Activated B cell treated with CpG ODN at 0.5 μM for 24 hours (primary cell): ENCODE measurements at regions of chr7 and their contacts with region 1.

Region 1: DNA sequence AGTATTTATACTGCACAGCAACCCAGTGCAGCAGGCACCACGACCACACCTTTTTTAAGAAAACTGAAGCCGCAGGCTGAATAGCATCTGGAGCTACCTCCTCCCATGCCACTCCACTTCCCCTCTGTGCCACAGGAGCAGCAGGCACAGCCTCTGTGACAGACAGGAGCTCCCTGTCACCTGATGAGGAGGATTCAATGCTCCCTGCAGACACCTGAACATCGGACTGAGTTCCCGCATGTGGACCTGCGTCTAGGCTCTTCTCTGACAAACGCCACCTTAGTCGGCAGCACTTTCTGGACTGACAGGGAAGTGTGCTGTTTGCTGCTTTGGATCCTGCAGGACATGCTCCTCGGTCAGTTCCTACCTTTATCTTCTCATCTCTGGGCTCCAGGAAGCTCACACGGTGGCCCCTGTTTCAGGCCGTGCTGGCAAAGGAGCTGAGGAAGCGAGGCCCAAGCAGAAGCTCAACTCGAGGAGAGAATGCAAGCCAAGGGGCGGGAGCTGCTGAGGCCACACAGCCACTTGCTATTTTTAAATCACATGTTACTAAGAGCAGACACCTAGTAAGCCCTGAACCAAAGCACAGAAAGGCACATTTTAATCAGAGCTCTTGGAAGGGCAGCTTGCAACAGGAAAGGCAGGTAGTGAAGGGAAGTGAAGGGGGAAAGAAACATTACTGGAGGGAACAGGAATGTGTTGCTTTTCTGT is 56.6 kb downstream of the VOPP1 start:
- DNase-seq: no peak
- ATAC-seq: peak; percentile 21
- H3K4me3 Mint-ChIP-seq: peak overlapping the region; percentile 66
- H3K27ac Mint-ChIP-seq: peak overlapping the region; percentile 85
- H3K4me1 Mint-ChIP-seq: peaks cover 95% of the 10 kb centered on the region
- H3K27me3 Mint-ChIP-seq: no peaks in the 10 kb centered on the region
- CTCF ChIP-seq: no peak

Region 2: GRCh38 chr7:55504093-55504859 is 11.4 kb before region 1 on chr7:
- CTCF ChIA-PET with region 1: no interaction called
- POLR2A ChIA-PET with region 1: interaction called, 10 read pairs
- intact Hi-C with region 1: loop called (anchors 2 kb)
- DNase-seq: no peak
- ATAC-seq: peak; percentile 30
- H3K4me3 Mint-ChIP-seq: peak overlapping the region; percentile 6
- H3K27ac Mint-ChIP-seq: peak overlapping the region; percentile 81
- H3K4me1 Mint-ChIP-seq: peaks cover 75% of the 10 kb centered on the region
- H3K27me3 Mint-ChIP-seq: no peaks in the 10 kb centered on the region
- CTCF ChIP-seq: no peak